AG04449 (cell line): ENCODE measurements at regions of chr1 and their contacts with region 1.

Region 1: GRCh38 chr1:30929135-30929889 is 20.8 kb upstream of the SDC3 start:
- DNase-seq: no peak
- H3K4me3 ChIP-seq: no peak overlapping the region
- CTCF ChIP-seq: peak; percentile 61

Region 2: GRCh38 chr1:30790850-30791778 is 138.2 kb before region 1 on chr1:
- CTCF ChIA-PET with region 1: interaction called, 405 read pairs
- POLR2A ChIA-PET with region 1: no interaction called
- DNase-seq: no peak
- H3K4me3 ChIP-seq: no peak overlapping the region
- CTCF ChIP-seq: no peak

Region 3: DNA sequence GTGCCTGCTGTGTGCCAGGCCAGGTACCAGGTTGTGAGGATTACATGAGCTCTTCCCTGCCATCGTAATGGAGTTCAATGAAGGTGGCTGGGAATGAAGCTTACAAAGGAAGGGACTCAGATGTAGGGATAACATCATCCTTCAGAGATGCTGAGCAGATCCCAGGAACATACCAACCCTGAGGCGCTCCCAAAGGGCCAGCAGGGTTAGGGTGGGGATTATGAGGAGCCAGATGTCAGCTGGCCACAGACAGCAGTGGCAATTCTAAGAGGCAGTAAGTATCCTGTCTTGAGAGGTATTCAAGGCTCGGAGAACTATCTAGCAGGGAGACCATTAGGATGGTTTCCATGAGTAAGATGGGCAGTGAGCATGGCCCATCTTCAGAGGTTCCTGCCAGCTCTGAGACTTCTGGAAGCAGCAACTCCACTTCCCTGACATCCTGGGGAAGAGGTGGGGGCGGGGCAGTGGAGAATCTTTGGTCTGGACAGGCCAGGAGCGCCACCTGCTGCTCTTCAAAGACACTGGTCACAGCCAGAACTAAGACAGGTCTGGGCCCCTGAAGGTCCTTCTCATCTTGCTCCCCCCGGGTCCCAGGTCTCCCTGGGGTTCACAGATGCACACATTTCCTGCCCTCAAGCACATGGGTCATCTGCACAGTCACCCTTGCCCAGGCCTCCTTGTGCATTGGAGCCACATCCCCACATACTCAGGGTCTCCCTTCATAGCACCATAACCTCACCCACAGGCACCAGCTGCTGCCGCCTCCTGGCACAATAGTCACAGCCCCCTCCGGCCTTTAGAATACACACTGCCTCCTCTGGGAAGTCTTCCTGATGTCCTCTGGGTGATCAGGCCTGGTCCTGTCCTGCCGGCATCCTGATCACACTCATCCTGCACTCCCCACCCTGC is 18.0 kb before region 1 on chr1:
- CTCF ChIA-PET with region 1: interaction called, 99 read pairs
- POLR2A ChIA-PET with region 1: no interaction called
- DNase-seq: no peak
- H3K4me3 ChIP-seq: no peak overlapping the region
- CTCF ChIP-seq: peak; percentile 94

Region 4: DNA sequence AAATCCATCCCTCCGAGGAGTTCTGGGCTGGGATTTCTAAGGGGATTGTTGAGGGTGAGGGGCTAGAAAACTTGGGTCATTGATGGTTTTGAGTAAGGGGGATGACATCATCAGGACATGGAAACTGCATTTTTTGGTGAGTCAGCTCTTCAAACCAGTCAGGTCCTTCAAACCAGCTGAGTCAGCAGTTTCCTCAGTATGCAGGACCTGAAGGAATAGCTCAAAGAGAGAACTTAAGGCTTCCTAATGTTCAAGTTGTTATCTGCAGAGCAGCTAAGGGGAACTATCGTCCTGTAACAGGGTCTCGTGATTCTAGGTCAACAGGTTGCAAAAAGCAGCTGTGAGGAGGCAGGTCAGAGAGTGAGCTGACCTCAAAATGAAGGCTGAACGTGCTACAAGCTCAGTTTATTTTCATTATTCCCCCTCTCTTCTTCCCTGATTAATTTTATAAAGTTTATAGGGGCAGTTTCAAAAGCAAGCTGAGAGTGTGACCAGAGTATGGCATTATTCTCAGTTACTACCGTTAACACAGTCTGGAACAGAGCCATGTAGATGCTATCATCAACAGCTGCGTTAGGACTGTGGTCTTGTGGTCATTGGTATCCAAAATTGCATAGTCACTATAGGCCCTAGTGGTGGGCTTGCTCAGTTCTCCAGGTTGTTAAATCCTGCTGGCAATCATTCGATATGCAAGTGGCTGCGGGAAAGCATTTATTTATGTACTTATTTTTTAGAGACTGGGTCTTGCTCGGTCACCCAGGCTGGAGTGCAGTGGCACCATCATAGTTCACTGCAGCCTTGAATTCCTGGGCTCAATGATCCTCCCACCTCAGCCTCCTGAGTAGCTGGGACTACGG is 10.1 kb before region 1 on chr1:
- CTCF ChIA-PET with region 1: interaction called, 99 read pairs
- POLR2A ChIA-PET with region 1: interaction called, 3 read pairs
- DNase-seq: no peak
- H3K4me3 ChIP-seq: no peak overlapping the region
- CTCF ChIP-seq: no peak

Region 5: DNA sequence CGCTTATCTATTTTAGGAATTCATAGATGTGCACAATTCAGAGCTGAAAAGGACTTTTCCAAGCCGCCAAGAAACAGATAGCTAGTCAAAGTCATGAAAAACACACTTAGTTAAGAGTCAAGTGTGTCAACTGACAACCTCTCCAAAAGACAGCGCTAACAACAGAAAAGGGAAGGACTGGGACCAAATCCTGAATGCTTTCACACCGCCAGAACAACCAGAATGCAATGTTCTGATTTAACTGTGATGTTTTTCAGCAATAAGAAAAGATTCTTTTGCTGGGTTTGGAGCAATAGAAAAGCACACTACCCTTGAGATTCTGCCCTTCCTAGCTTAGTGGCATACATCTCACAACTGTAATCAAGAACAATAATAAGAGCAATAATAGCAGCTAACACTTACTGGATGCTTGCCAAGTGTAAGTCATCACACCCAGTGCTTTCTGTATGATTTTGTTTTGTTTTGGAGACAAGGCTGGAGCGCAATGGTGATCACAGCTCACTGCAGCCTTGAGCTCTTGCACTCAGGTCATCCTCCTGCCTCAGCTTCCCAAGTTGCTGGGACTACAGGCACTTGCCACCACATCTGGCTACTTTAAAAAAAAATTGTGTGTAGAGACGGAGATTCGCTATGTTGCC is 13.1 kb after region 1 on chr1:
- CTCF ChIA-PET with region 1: interaction called, 41 read pairs
- POLR2A ChIA-PET with region 1: interaction called, 3 read pairs
- DNase-seq: no peak
- H3K4me3 ChIP-seq: no peak overlapping the region
- CTCF ChIP-seq: no peak